WTC11 (cell line): ENCODE measurements at regions of chr1 and their contacts with region 1.

Region 1: GRCh38 chr1:26190373-26190987 is at the start of gene CATSPER4:
- DNase-seq: peak; percentile 79
- ATAC-seq: peak; percentile 97
- H3K4me3 Mint-ChIP-seq: no peak within 1 kb of the TSS
- H3K27ac Mint-ChIP-seq: peak within 1 kb of the TSS; percentile 55; the same call in 1 of the 2 replicates
- H3K4me1 Mint-ChIP-seq: peaks cover 17% of the 10 kb centered on the region
- H3K27me3 Mint-ChIP-seq: no peaks in the 10 kb centered on the region; the same call in 1 of the 2 replicates
- CTCF ChIP-seq: 0 out of 2 replicates have a peak, but pooled peaks have one; percentile 20
- total RNA-seq, gene CATSPER4: 0.35 to 0.85 TPM (median 0.55 TPM) in 3 replicates

Region 2: GRCh38 chr1:26066857-26067256 is 123.6 kb before region 1 on chr1:
- CTCF ChIA-PET with region 1: no interaction called
- POLR2A ChIA-PET with region 1: no interaction called
- DNase-seq: no peak
- ATAC-seq: peak; percentile 20; the same call in 1 of the 2 replicates
- H3K4me3 Mint-ChIP-seq: no peak overlapping the region
- H3K27ac Mint-ChIP-seq: no peak overlapping the region
- H3K4me1 Mint-ChIP-seq: peaks cover 8% of the 10 kb centered on the region; the same call in 1 of the 2 replicates
- H3K27me3 Mint-ChIP-seq: no peaks in the 10 kb centered on the region
- CTCF ChIP-seq: no peak

Region 3: GRCh38 chr1:26161415-26162219 is 28.9 kb before region 1 on chr1:
- CTCF ChIA-PET with region 1: interaction called, 14 read pairs
- POLR2A ChIA-PET with region 1: no interaction called
- DNase-seq: peak; percentile 64
- ATAC-seq: peak; percentile 4; the same call in 1 of the 2 replicates
- H3K4me3 Mint-ChIP-seq: peak overlapping the region; percentile 74
- H3K27ac Mint-ChIP-seq: no peak overlapping the region
- H3K4me1 Mint-ChIP-seq: peaks cover 56% of the 10 kb centered on the region
- H3K27me3 Mint-ChIP-seq: peaks cover 92% of the 10 kb centered on the region
- CTCF ChIP-seq: no peak

Region 4: GRCh38 chr1:26177182-26177684 is 13.2 kb before region 1 on chr1 and contains the start of gene CNKSR1:
- CTCF ChIA-PET with region 1: interaction called, 68 read pairs
- POLR2A ChIA-PET with region 1: no interaction called
- DNase-seq: peak; percentile 94
- ATAC-seq: peak; percentile 100
- H3K4me3 Mint-ChIP-seq: peak within 1 kb of the TSS; percentile 82
- H3K27ac Mint-ChIP-seq: peak within 1 kb of the TSS; percentile 97
- H3K4me1 Mint-ChIP-seq: peaks cover 10% of the 10 kb centered on the region
- H3K27me3 Mint-ChIP-seq: no peaks in the 10 kb centered on the region
- CTCF ChIP-seq: no peak
- total RNA-seq, gene CNKSR1: 18.0 to 20.5 TPM (median 19.7 TPM) in 3 replicates

Region 5: DNA sequence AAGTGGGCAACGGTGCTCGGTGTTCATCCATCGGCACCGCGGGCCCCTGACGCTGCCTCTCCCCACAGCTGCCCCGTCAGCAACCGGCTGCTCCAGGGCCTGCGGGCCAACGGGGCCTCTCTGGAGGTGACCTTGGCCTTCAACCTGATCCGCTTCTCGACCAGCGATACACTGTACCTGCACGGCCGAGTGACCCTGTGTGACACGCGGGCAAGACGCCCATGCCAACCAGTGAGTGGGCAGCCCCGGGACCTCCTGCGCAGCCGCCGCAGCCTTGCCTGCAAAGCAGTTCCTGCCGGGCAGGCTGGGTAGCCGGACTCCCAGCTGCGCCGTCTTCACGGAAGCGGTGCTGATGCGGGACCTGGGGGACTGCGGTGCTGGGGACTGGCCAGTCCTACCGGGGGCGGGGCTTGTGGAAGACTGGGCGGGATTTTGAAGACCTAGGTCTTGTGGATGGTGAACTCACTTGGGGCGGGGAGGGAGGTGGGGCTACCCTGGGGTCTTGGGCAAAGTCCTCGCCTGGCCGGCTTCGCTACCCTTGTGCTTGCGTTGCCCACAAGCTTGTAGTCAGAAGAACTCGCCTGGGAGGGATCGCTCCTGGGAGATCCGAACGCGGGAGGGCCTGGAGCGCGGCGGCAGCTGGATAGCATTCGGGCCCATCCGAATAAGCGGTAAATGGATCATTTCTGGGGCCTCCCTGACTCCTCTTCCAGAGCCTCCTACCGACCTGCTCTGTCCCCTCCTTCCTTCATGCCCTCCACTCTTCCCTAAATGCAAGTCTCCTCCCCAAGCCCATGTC is 34.8 kb after region 1 on chr1:
- CTCF ChIA-PET with region 1: interaction called, 16 read pairs
- POLR2A ChIA-PET with region 1: interaction called, 5 read pairs
- DNase-seq: peak; percentile 97
- ATAC-seq: peak; percentile 98
- H3K4me3 Mint-ChIP-seq: peak overlapping the region; percentile 75
- H3K27ac Mint-ChIP-seq: no peak overlapping the region; the same call in 1 of the 2 replicates
- H3K4me1 Mint-ChIP-seq: peaks cover 14% of the 10 kb centered on the region
- H3K27me3 Mint-ChIP-seq: peaks cover 45% of the 10 kb centered on the region
- CTCF ChIP-seq: no peak

Region 6: GRCh38 chr1:26279456-26280332 is 89.2 kb after region 1 on chr1 and contains the start of gene SH3BGRL3:
- CTCF ChIA-PET with region 1: interaction called, 18 read pairs
- POLR2A ChIA-PET with region 1: interaction called, 6 read pairs
- DNase-seq: peak; percentile 76
- ATAC-seq: peak; percentile 71
- H3K4me3 Mint-ChIP-seq: peak within 1 kb of the TSS; percentile 85
- H3K27ac Mint-ChIP-seq: peak within 1 kb of the TSS; percentile 78
- H3K4me1 Mint-ChIP-seq: peaks cover 40% of the 10 kb centered on the region
- H3K27me3 Mint-ChIP-seq: no peaks in the 10 kb centered on the region
- CTCF ChIP-seq: no peak
- total RNA-seq, gene SH3BGRL3: 70.8 to 92.9 TPM (median 92.3 TPM) in 3 replicates

Region 7: DNA sequence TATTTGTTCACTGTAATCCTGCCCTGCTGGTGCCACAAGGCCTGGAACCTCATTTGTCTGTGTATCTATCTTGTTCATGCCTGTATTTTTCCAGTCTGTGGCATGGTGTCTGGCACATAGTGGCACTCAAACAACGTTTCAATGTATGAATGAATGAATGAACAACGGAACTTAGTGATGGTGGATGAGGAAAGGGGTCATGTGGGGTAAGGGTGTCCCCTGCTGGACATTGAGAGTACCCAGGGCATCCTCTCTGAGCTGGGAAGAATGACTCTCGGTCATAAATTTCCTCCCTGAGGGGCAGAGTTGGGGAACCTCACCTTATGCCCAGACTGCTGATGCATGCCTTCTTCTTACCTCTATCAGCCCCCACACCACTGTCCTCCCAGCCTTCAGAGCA is 201.0 kb after region 1 on chr1:
- CTCF ChIA-PET with region 1: interaction called, 12 read pairs
- POLR2A ChIA-PET with region 1: no interaction called
- DNase-seq: peak; percentile 38
- ATAC-seq: peak; percentile 86
- H3K4me3 Mint-ChIP-seq: no peak overlapping the region
- H3K27ac Mint-ChIP-seq: no peak overlapping the region
- H3K4me1 Mint-ChIP-seq: peaks cover 18% of the 10 kb centered on the region
- H3K27me3 Mint-ChIP-seq: no peaks in the 10 kb centered on the region
- CTCF ChIP-seq: peak; percentile 72